ENCODE measurements at regions of chr2 and their contacts with region 1.

Region 1: DNA sequence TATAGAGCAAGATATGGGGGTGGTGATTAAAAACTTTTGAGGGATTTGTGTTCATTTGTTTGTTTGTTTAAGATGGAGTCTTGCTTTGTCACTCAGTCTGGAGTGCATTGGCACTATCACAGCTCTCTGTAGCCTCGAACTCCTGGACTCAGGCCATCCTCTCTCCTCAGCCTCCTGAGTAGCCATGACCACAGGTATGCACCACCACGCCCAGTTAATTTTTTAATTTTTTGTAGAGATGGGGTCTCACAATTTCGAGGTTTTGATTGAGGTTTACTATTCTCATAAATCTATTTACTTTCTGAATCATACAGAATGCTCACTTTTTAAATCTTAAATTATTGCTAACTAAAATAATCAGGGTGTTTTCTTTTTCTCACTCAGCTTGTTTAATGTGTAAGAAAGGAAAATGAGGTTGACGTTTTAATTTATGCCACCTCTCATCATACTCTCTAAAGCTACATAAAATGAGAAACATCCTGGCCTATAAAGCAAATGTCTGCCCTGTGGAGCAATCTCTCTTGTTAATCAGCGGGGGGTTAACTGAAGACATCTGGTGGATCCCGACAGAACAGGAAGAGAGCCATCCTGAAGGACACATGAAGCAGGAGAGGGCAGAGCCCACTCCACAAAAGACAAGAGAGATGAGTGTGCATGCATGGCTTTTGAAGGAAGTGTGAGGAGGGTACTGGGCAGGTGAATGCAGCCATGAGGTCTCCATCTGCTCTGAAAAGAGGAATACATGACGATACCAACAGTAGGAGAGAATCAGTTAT is 589.1 kb upstream of the SLC8A1 start:
- DNase-seq: no peak
- H3K4me3 ChIP-seq: no peak overlapping the region
- H3K27ac ChIP-seq: no peak overlapping the region
- H3K4me1 ChIP-seq: no peaks in the 10 kb centered on the region
- H3K27me3 ChIP-seq: no peaks in the 10 kb centered on the region
- CTCF ChIP-seq: no peak
- POLR2A ChIP-seq: no peak

Region 2: DNA sequence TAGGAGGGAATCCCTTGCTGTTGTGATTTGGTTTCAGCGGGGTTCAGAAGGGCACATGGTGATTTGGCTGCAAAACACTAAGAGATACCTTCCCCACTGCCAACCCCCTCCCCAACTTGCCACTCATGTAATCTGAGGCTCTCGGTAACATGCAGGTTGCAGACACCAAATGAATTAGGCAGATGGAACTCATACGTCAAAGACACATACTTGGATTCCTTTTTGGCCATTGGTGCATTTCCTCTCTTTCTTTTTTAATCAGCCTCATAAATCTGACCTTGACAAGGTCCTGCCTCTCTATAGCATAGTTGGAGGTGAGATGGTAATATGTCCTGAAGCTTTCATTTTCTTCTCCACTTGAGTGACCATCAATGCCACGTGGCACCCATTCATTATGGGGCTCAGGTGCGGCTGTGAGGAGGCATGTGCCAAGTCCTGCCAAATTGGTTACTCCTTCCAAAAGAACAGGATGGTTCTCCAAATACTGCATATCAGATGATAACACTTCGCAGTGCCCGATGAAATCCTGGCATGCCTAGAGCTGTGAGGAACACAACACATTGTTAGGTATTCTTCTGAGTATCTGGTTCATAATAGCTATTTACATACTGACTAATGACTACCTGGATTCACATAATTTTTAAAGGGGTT is 1383.6 kb before region 1 on chr2:
- intact Hi-C with region 1: loop called (anchors 10 kb)
- DNase-seq: no peak
- H3K4me3 ChIP-seq: no peak overlapping the region
- H3K27ac ChIP-seq: no peak overlapping the region
- H3K4me1 ChIP-seq: no peaks in the 10 kb centered on the region
- H3K27me3 ChIP-seq: no peaks in the 10 kb centered on the region
- CTCF ChIP-seq: no peak
- POLR2A ChIP-seq: no peak

Region 3: DNA sequence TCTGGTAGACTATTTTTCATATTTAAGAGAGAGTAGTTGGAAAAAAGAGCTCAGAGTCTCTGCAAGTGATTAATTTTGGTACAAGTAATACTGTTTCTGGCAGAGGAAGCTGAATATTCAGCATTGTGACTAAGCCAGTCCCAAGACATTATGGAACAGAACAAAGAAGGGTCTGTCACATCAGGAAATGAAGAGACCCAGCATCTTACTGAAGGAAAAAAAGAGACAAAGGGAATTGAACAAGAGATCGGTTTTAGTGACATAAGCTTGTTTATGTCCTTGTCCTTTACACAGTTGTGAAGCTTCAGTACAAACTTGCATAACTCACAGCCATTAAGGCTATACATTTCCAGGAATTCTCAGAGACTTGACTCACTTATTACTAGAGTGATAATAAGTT is 20.6 kb before region 1 on chr2:
- intact Hi-C with region 1: no loop called
- DNase-seq: no peak
- H3K4me3 ChIP-seq: no peak overlapping the region
- H3K27ac ChIP-seq: no peak overlapping the region
- H3K4me1 ChIP-seq: no peaks in the 10 kb centered on the region
- H3K27me3 ChIP-seq: no peaks in the 10 kb centered on the region
- CTCF ChIP-seq: no peak
- POLR2A ChIP-seq: no peak

Region 4: DNA sequence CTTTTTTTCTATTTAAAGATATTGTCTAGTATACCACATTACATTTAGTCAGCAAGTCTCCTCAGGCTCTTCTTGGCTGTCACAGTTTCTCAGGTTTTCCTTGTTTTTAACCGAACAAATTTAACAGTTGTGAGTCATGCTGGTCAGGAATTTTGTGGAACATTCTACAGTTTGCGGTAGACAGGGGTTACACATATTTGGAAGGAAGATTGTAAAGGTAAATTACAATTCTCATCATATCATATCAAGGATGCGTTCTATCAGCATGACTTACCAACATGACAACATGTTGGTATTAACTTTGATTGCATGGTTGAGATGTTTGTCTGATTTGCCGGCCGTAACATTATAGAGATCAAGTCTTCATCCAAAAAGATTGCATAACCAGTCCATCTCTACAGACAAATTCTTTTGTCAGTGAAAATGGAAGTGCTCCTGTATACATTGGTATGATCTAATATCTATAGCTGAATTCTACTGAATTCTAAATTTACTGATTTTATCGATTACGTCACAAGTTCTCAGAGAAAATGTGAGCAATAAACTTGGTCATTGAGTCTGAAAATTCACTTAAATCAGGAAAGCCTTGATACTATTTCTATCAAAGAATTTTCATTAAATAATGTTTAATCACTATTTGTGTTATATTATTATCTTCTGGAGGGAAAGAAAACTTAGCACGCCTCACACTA is 75.3 kb after region 1 on chr2:
- intact Hi-C with region 1: no loop called
- DNase-seq: no peak
- H3K4me3 ChIP-seq: no peak overlapping the region
- H3K27ac ChIP-seq: no peak overlapping the region
- H3K4me1 ChIP-seq: no peaks in the 10 kb centered on the region
- H3K27me3 ChIP-seq: no peaks in the 10 kb centered on the region
- CTCF ChIP-seq: no peak
- POLR2A ChIP-seq: no peak